Adrenal gland (tissue), 19 donors: ENCODE measurements at regions of chr7 and their contacts with region 1.

Region 1: DNA sequence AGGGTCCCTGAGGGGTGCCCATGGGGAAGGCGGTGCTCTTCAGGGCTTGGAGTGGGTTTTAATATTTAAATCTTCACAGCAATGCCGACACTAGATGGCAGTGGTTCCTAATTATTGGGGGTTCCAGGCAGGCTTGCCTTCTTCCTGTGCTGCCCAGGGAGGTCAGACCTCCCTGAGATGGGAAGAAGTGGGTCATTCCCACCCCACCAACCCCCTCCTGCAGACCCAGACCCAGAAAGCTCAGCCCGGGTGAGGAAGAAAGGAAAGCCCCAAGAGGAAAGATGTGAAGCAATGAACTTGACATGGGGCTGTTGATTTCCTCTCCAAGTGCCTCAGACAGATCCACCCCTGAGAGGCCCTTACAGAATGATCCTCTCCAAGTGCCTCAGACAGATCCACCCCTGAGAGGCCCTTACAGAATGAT is 85.1 kb upstream of the LANCL2 start:
- DNase-seq: peak; percentile 56 to 80 (median 72)
- H3K4me3 ChIP-seq: no peak overlapping the region
- H3K27ac ChIP-seq: no peak overlapping the region
- H3K4me1 ChIP-seq: no peaks in the 10 kb centered on the region
- H3K27me3 ChIP-seq: no peaks in the 10 kb centered on the region
- CTCF ChIP-seq: peak; percentile 41 to 76 (median 68)
- POLR2A ChIP-seq: no peak

Region 2: DNA sequence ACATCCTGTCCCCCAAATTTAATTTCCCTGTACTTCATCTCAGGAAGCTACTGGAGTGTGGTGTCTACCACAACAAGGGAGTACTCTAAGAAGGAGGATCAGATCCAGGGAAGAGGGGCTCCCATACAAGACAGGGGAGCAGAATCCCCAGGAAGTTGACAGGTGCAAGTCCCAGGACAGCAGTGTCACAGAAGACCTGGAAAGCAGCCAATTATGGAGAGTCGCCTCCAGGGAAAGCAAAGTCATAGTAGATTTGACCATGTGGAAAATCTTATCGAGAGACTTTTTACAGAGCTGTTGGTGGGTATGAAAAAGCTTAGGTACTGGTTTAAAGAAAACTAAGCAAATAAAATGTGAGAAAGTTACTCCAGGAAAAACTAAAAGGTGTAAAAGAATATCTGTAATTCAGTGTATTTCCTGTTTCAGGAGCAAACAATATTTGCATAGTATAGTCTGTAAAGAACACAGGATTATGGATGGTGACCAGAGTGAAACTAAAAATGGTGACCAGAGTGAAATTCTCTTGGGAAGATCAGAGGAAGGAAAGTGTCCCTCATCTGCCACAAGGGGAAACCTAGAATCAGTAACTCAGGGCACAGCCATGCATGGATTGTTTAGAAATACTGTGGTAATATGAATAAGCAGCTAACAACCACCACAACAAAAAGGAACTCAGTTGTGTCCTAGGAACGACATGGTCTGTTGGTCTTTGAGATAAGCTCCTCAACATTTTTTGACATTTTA is 129.6 kb after region 1 on chr7:
- intact Hi-C with region 1: loop called (anchors 2 to 5 kb)
- DNase-seq: peak in 1 of 7 donors; percentile 18
- H3K4me3 ChIP-seq: no peak overlapping the region
- H3K27ac ChIP-seq: no peak overlapping the region
- H3K4me1 ChIP-seq: no peaks in the 10 kb centered on the region
- H3K27me3 ChIP-seq: no peaks in the 10 kb centered on the region
- CTCF ChIP-seq: no peak
- POLR2A ChIP-seq: no peak

Region 3: GRCh38 chr7:55415173-55415778 is 135.2 kb after region 1 on chr7:
- intact Hi-C with region 1: loop called (anchors 2 to 5 kb)
- DNase-seq: peak; percentile 72 to 92 (median 85)
- H3K4me3 ChIP-seq: no peak overlapping the region
- H3K27ac ChIP-seq: no peak overlapping the region
- H3K4me1 ChIP-seq: no peaks in the 10 kb centered on the region
- H3K27me3 ChIP-seq: no peaks in the 10 kb centered on the region
- CTCF ChIP-seq: peak; percentile 69 to 92 (median 82)
- POLR2A ChIP-seq: no peak